ENCODE measurements at regions of chr10 and their contacts with region 1.

Region 1: DNA sequence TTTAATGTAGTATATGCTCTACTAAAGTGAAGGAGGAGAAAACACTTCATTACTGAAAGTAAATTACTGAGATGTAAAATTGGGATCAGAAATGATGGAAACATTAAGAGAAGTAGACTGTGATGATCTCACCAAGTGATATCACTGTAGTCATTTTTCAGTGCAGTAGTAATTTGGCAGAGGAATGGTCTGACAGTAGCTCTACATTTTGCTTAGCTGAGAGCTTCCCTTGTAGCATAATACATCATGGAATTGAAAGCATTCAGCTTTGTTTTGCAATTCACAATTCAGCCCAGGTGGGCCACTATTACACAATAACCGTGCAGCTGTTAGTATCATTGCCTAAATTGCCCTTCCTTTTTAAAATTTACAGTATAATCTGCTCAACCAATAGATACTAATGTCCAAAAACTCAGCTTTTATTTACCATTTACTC is 19.4 kb upstream of the CABCOCO1 start:
- DNase-seq: no peak
- ATAC-seq: no peak
- H3K4me3 Mint-ChIP-seq: no peak overlapping the region
- H3K27ac Mint-ChIP-seq: no peak overlapping the region
- H3K4me1 Mint-ChIP-seq: no peaks in the 10 kb centered on the region
- H3K27me3 Mint-ChIP-seq: no peaks in the 10 kb centered on the region
- CTCF ChIP-seq: no peak

Region 2: GRCh38 chr10:61592581-61592980 is 50.8 kb before region 1 on chr10:
- CTCF ChIA-PET with region 1: no interaction called
- POLR2A ChIA-PET with region 1: no interaction called
- intact Hi-C with region 1: no loop called
- DNase-seq: peak; percentile 17
- ATAC-seq: no peak
- H3K4me3 Mint-ChIP-seq: no peak overlapping the region
- H3K27ac Mint-ChIP-seq: no peak overlapping the region
- H3K4me1 Mint-ChIP-seq: no peaks in the 10 kb centered on the region
- H3K27me3 Mint-ChIP-seq: peaks cover 1% of the 10 kb centered on the region
- CTCF ChIP-seq: peak; percentile 32

Region 3: GRCh38 chr10:61701055-61701705 is 57.8 kb after region 1 on chr10:
- CTCF ChIA-PET with region 1: no interaction called
- POLR2A ChIA-PET with region 1: no interaction called
- intact Hi-C with region 1: loop called (anchors 10 kb)
- DNase-seq: no peak
- ATAC-seq: no peak
- H3K4me3 Mint-ChIP-seq: no peak overlapping the region
- H3K27ac Mint-ChIP-seq: no peak overlapping the region
- H3K4me1 Mint-ChIP-seq: no peaks in the 10 kb centered on the region
- H3K27me3 Mint-ChIP-seq: no peaks in the 10 kb centered on the region
- CTCF ChIP-seq: no peak

Measured in activated CD8-positive, alpha-beta T cell treated with anti-CD3 and anti-CD28 coated beads for 36 hours (primary cell).